Heart right ventricle (tissue), 16 donors: ENCODE measurements at regions of chr13 and their contacts with region 1.

Region 1: DNA sequence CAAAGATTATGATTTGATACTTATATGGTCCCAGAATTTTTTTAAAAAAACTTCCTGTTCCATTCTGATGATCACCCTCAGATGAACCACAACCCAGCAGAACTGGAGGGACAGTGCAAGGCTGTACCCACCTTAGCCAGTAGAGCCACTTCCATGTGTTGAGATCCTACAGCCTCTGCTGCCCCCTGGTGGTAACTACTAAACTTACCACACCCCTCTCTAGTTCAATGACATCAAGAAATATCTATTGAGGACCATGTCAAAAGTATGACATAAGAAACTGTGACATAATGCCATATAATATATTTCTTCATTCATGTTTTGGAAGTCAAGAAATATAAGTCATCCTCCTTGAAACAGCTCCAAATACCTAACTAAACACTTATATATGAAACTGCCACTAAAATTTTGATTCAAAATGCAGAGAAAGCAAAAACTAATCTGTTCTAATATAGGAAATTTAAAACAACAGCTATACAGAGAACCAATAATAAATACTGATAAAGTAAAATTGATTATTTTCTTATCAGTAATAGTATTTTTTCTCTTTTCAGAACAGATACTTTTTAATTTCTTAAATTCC is 412.6 kb downstream of the KCTD12 start:
- DNase-seq: peak; percentile 18 to 79
- ATAC-seq: peak; percentile 88 to 98 (median 96)
- H3K4me3 ChIP-seq: no peak overlapping the region
- H3K27ac ChIP-seq: peak overlapping the region in 2 of 10 donors; percentile 21 to 53
- H3K4me1 ChIP-seq: peaks cover 0 to 21% (median 4%) of the 10 kb centered on the region in 9 donors
- H3K27me3 ChIP-seq: no peaks in the 10 kb centered on the region
- CTCF ChIP-seq: peak; percentile 77 to 92 (median 86)

Region 2: GRCh38 chr13:75691183-75691582 is 782.5 kb before region 1 on chr13:
- intact Hi-C with region 1: loop called in 5 of 10 experiments (anchors 5 to 10 kb)
- DNase-seq: no peak
- ATAC-seq: no peak
- H3K4me3 ChIP-seq: no peak overlapping the region
- H3K27ac ChIP-seq: no peak overlapping the region
- H3K4me1 ChIP-seq: peaks cover 0 to 4% (median 0%) of the 10 kb centered on the region in 9 donors
- H3K27me3 ChIP-seq: no peaks in the 10 kb centered on the region
- CTCF ChIP-seq: no peak

Region 3: GRCh38 chr13:75870397-75870903 is 603.2 kb before region 1 on chr13:
- intact Hi-C with region 1: loop called in 3 of 10 experiments (anchors 1 to 5 kb)
- DNase-seq: no peak
- ATAC-seq: peak in 4 of 8 donors; percentile 21 to 43 (median 26)
- H3K4me3 ChIP-seq: peak overlapping the region in 9 of 10 donors; percentile 28 to 56 (median 39)
- H3K27ac ChIP-seq: peak overlapping the region in 1 of 10 donors; percentile 32
- H3K4me1 ChIP-seq: no peaks in the 10 kb centered on the region
- H3K27me3 ChIP-seq: peaks cover 0 to 4% (median 0%) of the 10 kb centered on the region in 7 donors
- CTCF ChIP-seq: peak; percentile 54 to 83 (median 78)

Region 4: GRCh38 chr13:75876360-75877050 is 597.1 kb before region 1 on chr13:
- intact Hi-C with region 1: loop called (anchors 1 to 5 kb)
- DNase-seq: peak in 1 of 2 donors; percentile 64
- ATAC-seq: peak; percentile 71 to 92 (median 87)
- H3K4me3 ChIP-seq: no peak overlapping the region
- H3K27ac ChIP-seq: no peak overlapping the region
- H3K4me1 ChIP-seq: peaks cover 0 to 7% (median 0%) of the 10 kb centered on the region in 9 donors
- H3K27me3 ChIP-seq: no peaks in the 10 kb centered on the region
- CTCF ChIP-seq: peak; percentile 87 to 95 (median 89)

Region 5: DNA sequence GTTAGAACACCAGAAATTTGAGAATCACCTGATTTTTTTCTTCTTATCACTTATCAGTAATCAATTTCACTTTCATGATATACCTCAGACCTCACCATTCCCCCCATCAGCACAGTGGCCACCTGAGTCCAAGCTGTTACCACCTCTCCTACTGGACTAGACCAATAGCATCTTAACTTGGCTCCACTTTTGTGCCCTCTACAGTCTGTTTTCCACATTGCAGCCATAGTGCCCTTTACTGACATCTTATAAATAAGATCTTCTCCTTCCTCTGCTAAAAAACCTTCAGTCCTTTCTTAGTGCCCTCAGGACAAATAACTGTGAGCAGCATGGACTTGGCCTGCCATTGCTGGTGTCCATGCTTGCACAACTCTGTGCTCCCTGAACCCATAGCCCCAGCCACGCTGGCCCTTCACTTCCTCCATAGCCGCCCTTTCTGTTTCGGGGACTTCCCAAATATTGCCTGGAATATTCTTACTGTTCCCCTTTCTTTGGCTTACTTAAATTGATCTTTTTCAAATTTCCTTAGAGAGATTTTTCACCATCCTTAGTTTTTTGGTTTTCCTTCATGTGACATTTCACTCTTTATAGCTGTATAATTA is 456.7 kb before region 1 on chr13:
- intact Hi-C with region 1: loop called in 1 of 10 experiments (anchors 10 kb)
- DNase-seq: no peak
- ATAC-seq: peak in 1 of 8 donors; percentile 29
- H3K4me3 ChIP-seq: no peak overlapping the region
- H3K27ac ChIP-seq: no peak overlapping the region
- H3K4me1 ChIP-seq: peaks cover 0 to 20% (median 10%) of the 10 kb centered on the region in 9 donors
- H3K27me3 ChIP-seq: no peaks in the 10 kb centered on the region
- CTCF ChIP-seq: peak in 7 of 9 donors; percentile 27 to 51 (median 38)

Region 6: GRCh38 chr13:76225815-76226489 is 247.7 kb before region 1 on chr13:
- intact Hi-C with region 1: loop called in 5 of 10 experiments (anchors 5 to 10 kb)
- DNase-seq: peak; percentile 18 to 69
- ATAC-seq: peak; percentile 83 to 97 (median 94)
- H3K4me3 ChIP-seq: no peak overlapping the region
- H3K27ac ChIP-seq: peak overlapping the region in 4 of 10 donors; percentile 7 to 58 (median 24)
- H3K4me1 ChIP-seq: peaks cover 0 to 17% (median 7%) of the 10 kb centered on the region in 9 donors
- H3K27me3 ChIP-seq: no peaks in the 10 kb centered on the region
- CTCF ChIP-seq: no peak

Region 7: GRCh38 chr13:76677043-76677442 is 203.4 kb after region 1 on chr13:
- intact Hi-C with region 1: no loop called
- DNase-seq: peak; percentile 20 to 75
- ATAC-seq: peak; percentile 77 to 96 (median 94)
- H3K4me3 ChIP-seq: no peak overlapping the region
- H3K27ac ChIP-seq: peak overlapping the region in 4 of 10 donors; percentile 15 to 54 (median 28)
- H3K4me1 ChIP-seq: peaks cover 0 to 6% (median 0%) of the 10 kb centered on the region in 9 donors
- H3K27me3 ChIP-seq: no peaks in the 10 kb centered on the region
- CTCF ChIP-seq: no peak

Region 8: GRCh38 chr13:76886292-76887075 is 412.8 kb after region 1 on chr13 and contains the start of gene KCTD12:
- intact Hi-C with region 1: loop called in 1 of 10 experiments (anchors 10 kb)
- DNase-seq: peak; percentile 90 to 93
- ATAC-seq: peak; percentile 80 to 95 (median 84)
- H3K4me3 ChIP-seq: peak within 1 kb of the TSS; percentile 61 to 90 (median 84)
- H3K27ac ChIP-seq: peak within 1 kb of the TSS; percentile 88 to 97 (median 94)
- H3K4me1 ChIP-seq: peaks cover 0 to 44% (median 18%) of the 10 kb centered on the region in 9 donors
- H3K27me3 ChIP-seq: peaks cover 0 to 6% (median 0%) of the 10 kb centered on the region in 7 donors
- CTCF ChIP-seq: peak in 7 of 9 donors; percentile 20 to 67 (median 42)
- total RNA-seq, gene KCTD12: 21.0 to 56.5 (median 32.5) TPM